Transverse colon (tissue), 4 donors: ENCODE measurements at regions of chr12 and their contacts with region 1.

Region 1: GRCh38 chr12:56998981-56999380 is 7.4 kb downstream of the ZBTB39 start:
- DNase-seq: peak; percentile 29
- H3K4me3 ChIP-seq: no peak overlapping the region
- H3K27ac ChIP-seq: no peak overlapping the region
- H3K4me1 ChIP-seq: peaks cover 6 to 19% (median 10%) of the 10 kb centered on the region in 4 donors
- H3K27me3 ChIP-seq: no peaks in the 10 kb centered on the region
- CTCF ChIP-seq: no peak
- EP300 ChIP-seq: no peak
- POLR2A ChIP-seq: no peak

Region 2: DNA sequence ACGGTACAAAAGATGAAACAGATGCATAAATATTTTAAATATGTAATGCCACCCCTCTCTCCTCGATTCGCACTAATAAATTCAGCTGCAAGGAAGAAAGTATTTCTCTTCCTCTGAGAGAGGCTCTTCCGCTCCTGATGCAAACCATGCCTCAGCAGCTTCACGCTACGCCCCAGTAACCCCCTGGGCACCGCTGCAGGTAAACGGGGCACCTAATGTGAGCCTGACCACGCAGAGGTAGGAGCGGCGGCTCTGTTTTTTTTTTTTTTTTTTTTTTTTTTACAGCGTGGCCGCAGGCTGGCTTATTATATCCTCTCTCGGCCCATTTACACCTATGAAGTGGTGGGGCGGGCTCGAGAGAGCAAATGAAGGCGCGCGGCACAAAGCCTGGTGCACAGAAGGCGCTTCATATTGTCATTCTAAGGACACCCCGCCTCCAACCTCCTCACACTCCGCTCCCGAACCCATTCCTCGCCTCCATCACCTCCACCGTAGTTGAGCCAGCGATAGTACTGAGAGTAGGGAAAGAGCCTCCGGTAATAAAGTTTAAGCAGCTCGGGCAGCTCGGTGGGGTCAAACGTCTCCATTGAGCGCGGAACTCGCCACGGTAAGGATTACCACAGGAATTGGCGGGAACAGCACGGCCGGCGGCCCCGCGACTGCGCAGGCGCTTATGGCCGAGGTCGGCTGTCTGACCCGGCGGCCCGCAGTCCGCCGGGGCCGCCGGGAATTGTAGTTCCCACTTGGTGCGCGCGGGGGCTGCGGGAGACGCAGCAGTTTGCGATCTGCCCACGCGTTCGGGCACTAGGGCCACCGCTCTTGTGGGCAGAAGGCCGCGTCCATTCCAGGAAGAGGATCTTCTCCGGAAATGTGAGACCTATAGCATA is 247.0 kb before region 1 on chr12 and contains the start of gene PRIM1:
- in situ Hi-C with region 1: loop called in 1 of 4 experiments (anchors 10 kb)
- intact Hi-C with region 1: no loop called
- DNase-seq: peak; percentile 87
- H3K4me3 ChIP-seq: peak within 1 kb of the TSS; percentile 8 to 89 (median 74)
- H3K27ac ChIP-seq: peak within 1 kb of the TSS; percentile 80 to 90 (median 83)
- H3K4me1 ChIP-seq: peaks cover 0 to 17% (median 9%) of the 10 kb centered on the region in 4 donors
- H3K27me3 ChIP-seq: no peaks in the 10 kb centered on the region
- CTCF ChIP-seq: peak in 4 of 5 experiments; percentile 25 to 60 (median 48)
- EP300 ChIP-seq: no peak
- POLR2A ChIP-seq: peak; percentile 33
- total RNA-seq, gene PRIM1: 1.4 to 10.6 (median 5.6) TPM in 3 of 4 donors, not detected in the other

Region 3: GRCh38 chr12:57031138-57031725 is 32.3 kb after region 1 on chr12:
- in situ Hi-C with region 1: no loop called
- intact Hi-C with region 1: no loop called
- DNase-seq: no peak
- H3K4me3 ChIP-seq: no peak overlapping the region
- H3K27ac ChIP-seq: no peak overlapping the region
- H3K4me1 ChIP-seq: peaks cover 0 to 13% (median 0%) of the 10 kb centered on the region in 4 donors
- H3K27me3 ChIP-seq: no peaks in the 10 kb centered on the region
- CTCF ChIP-seq: no peak
- EP300 ChIP-seq: no peak
- POLR2A ChIP-seq: no peak

Region 4: GRCh38 chr12:57693659-57694458 is 694.9 kb after region 1 on chr12 and contains the start of gene OS9:
- in situ Hi-C with region 1: no loop called
- intact Hi-C with region 1: no loop called
- DNase-seq: peak; percentile 97
- H3K4me3 ChIP-seq: peak within 1 kb of the TSS; percentile 61 to 89 (median 82)
- H3K27ac ChIP-seq: peak within 1 kb of the TSS; percentile 73 to 88 (median 85)
- H3K4me1 ChIP-seq: peaks cover 0 to 16% (median 12%) of the 10 kb centered on the region in 4 donors
- H3K27me3 ChIP-seq: peaks cover 11% of the 10 kb centered on the region
- CTCF ChIP-seq: peak; percentile 73 to 93 (median 79)
- EP300 ChIP-seq: no peak
- POLR2A ChIP-seq: peak; percentile 92
- total RNA-seq, gene OS9: 187 to 362 (median 249) TPM